ENCODE measurements at regions of chr1 and their contacts with region 1.

Region 1: GRCh38 chr1:116360429-116361173 is 12.4 kb upstream of the ATP1A1 start:
- DNase-seq: no peak
- H3K4me3 ChIP-seq: no peak overlapping the region
- H3K27ac ChIP-seq: no peak overlapping the region
- H3K4me1 ChIP-seq: no peaks in the 10 kb centered on the region
- H3K27me3 ChIP-seq: no peaks in the 10 kb centered on the region
- CTCF ChIP-seq: peak; percentile 36 to 54

Region 2: GRCh38 chr1:116418091-116418830 is 57.7 kb after region 1 on chr1:
- intact Hi-C with region 1: loop called (anchors 10 kb)
- DNase-seq: peak; percentile 71 to 87
- H3K4me3 ChIP-seq: peak overlapping the region; percentile 84 to 92
- H3K27ac ChIP-seq: peak overlapping the region; percentile 64 to 82
- H3K4me1 ChIP-seq: peaks cover 0 to 26% (median 14%) of the 10 kb centered on the region in 4 donors
- H3K27me3 ChIP-seq: no peaks in the 10 kb centered on the region
- CTCF ChIP-seq: no peak

Measured in tibial artery (tissue), 4 donors.